ENCODE measurements at regions of chr1 and their contacts with region 1.

Region 1: DNA sequence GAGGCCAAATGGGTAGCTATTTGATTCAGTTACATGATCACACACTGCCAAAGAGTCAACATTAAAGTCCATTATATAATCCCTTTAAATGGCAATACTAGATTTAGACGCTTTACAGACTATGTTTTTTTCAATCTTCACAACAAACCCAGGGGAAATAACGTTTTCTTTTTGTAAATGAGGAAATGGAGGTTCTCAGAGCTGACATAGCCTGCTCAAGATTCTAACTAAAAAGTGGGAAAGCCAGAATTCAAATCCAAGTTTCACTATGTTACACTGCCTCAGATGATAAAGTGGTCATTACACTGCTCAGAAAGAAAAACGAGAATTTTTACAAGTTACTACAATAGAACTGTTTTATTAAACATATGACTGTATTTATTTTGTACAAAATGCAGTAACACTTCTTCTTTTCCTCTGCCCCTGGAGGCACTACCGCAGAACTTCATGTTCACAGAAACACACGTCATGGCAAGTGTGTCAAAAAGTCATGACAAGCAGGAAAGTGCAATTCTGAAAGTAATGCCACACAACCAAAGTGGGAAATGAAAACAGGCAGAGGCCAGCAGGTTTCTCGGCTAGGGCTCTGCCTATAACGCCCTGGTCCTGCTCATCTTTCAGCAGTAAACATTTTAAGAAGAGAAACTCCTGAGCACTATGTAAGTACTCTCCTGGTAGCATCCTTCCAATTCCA is 19.0 kb downstream of the THEMIS2 start:
- DNase-seq: no peak
- ATAC-seq: no peak
- H3K4me3 ChIP-seq: no peak overlapping the region
- H3K27ac ChIP-seq: no peak overlapping the region
- H3K4me1 ChIP-seq: 0 out of 5 replicates have a peak, but pooled peaks cover 0 to 2% of the 10 kb centered on the region in 2 experiments
- H3K27me3 ChIP-seq: no peaks in the 10 kb centered on the region
- CTCF ChIP-seq: no peak
- EP300 ChIP-seq: no peak
- POLR2A ChIP-seq: no peak
- RAD21 ChIP-seq: no peak

Region 2: DNA sequence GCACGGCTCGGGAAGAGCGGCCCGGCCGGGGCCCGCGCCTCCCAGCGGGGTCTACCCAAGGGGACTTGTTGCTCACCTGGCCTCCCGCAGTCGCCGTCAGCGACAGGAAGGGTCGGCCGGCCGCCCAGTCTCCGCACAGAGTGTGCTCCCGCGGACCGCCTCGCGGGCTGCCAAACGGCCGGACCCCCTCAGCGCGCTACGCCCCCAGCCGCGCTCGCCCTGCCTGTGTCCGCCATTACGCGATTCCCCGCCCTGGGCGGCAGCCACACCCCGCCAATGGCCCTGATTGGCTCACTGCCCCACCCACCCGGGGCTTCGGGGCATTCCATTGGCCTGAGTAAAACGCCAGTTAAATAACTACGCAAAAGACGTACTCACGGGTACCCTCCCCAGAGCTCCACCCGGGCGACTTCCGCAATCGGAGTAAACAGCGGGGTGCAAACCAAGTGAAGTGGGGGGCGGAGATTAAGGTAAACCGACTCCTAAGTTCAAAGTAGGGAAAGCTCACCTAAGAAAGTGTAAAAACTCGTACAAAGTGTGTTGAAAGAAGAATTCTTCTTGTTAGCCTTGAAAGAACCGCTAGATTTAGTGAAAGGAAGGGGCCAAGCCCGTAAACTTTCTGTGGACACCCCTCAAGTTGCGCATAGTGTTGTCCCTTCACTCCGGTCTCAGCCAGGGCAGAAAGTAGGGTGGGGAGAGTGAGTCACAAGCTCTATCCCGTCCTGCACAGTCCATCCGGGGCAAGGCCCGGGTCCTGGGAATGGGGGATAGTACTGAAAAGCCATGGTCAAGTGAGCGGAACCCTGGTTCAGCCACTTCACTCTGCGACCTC is 401.2 kb before region 1 on chr1 and contains the start of gene WASF2:
- CTCF ChIA-PET with region 1: no interaction called
- POLR2A ChIA-PET with region 1: no interaction called
- in situ Hi-C with region 1: no loop called
- intact Hi-C with region 1: no loop called
- DNase-seq: peak; percentile 93 to 99 (median 98)
- ATAC-seq: peak; percentile 96
- H3K4me3 ChIP-seq: peak within 1 kb of the TSS; percentile 79
- H3K27ac ChIP-seq: peak within 1 kb of the TSS; percentile 99
- H3K4me1 ChIP-seq: peaks cover 8 to 25% of the 10 kb centered on the region in 2 experiments; a peak in 4 of 5 replicates
- H3K27me3 ChIP-seq: no peaks in the 10 kb centered on the region
- CTCF ChIP-seq: no peak; a peak in 1 of 6 replicates
- EP300 ChIP-seq: peak; percentile 5
- POLR2A ChIP-seq: peak; percentile 92
- RAD21 ChIP-seq: 0 out of 4 replicates have a peak, but pooled peaks of 1 of the 2 experiments have one; percentile 13
- polyA plus RNA-seq, gene WASF2: 8.2 to 9.7 TPM

Region 3: DNA sequence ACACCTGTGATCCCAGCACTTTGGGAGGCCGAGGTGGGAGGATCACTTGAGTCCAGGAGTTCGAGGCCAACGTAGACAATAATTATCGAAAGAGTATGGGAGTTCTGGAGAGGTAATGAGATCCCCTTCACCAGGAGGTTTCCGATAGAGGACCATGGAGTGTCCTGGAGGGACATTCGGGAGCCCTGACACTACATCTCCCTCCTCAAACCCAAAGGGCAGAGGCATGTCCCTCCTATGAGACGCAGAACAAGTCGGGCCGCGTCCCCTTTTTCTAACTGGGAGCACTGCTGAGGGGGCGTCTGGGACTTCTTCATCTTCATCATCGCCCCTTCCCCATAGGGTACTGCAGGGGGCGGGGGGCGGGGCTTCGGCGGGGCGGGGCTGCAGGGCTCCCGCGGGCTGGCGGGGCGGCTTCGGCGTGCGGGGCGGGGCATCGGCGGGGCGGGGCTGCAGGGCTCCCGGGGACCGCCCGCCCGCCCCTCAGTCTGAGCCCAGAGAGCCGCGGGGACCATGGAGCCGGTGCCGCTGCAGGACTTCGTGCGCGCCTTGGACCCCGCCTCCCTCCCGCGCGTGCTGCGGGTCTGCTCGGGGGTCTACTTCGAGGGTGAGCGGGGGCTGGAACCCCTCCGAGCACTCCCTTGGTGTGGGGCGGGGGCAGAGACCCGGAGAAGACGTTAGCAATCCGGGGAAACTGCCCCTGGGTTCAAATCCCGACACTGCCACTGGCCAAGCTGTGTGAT is 19.1 kb before region 1 on chr1 and contains the start of gene THEMIS2:
- CTCF ChIA-PET with region 1: no interaction called
- POLR2A ChIA-PET with region 1: interaction called, 16 read pairs
- in situ Hi-C with region 1: no loop called
- intact Hi-C with region 1: no loop called
- DNase-seq: peak; percentile 82 to 97 (median 96)
- ATAC-seq: peak; percentile 94
- H3K4me3 ChIP-seq: peak within 1 kb of the TSS; percentile 67
- H3K27ac ChIP-seq: peak within 1 kb of the TSS; percentile 28; the same call in 1 of the 3 replicates
- H3K4me1 ChIP-seq: peaks cover 25 to 48% of the 10 kb centered on the region in 2 experiments
- H3K27me3 ChIP-seq: no peaks in the 10 kb centered on the region
- CTCF ChIP-seq: no peak
- EP300 ChIP-seq: no peak
- POLR2A ChIP-seq: peak; percentile 54; the same call in 1 of the 2 replicates
- RAD21 ChIP-seq: no peak
- polyA plus RNA-seq, gene THEMIS2: 2.3 to 3.4 TPM

Region 4: GRCh38 chr1:27879374-27880082 is 11.8 kb before region 1 on chr1:
- CTCF ChIA-PET with region 1: no interaction called
- POLR2A ChIA-PET with region 1: interaction called, 16 read pairs
- in situ Hi-C with region 1: no loop called
- intact Hi-C with region 1: no loop called
- DNase-seq: peak in 1 of 4 experiments; percentile 47
- ATAC-seq: peak; percentile 36
- H3K4me3 ChIP-seq: no peak overlapping the region
- H3K27ac ChIP-seq: no peak overlapping the region
- H3K4me1 ChIP-seq: peaks cover 2 to 30% of the 10 kb centered on the region in 2 experiments; a peak in 3 of 5 replicates
- H3K27me3 ChIP-seq: no peaks in the 10 kb centered on the region
- CTCF ChIP-seq: no peak
- EP300 ChIP-seq: no peak
- POLR2A ChIP-seq: no peak
- RAD21 ChIP-seq: no peak